Endothelial cell of umbilical vein (primary cell): ENCODE measurements at regions of chr1 and their contacts with region 1.

Region 1: DNA sequence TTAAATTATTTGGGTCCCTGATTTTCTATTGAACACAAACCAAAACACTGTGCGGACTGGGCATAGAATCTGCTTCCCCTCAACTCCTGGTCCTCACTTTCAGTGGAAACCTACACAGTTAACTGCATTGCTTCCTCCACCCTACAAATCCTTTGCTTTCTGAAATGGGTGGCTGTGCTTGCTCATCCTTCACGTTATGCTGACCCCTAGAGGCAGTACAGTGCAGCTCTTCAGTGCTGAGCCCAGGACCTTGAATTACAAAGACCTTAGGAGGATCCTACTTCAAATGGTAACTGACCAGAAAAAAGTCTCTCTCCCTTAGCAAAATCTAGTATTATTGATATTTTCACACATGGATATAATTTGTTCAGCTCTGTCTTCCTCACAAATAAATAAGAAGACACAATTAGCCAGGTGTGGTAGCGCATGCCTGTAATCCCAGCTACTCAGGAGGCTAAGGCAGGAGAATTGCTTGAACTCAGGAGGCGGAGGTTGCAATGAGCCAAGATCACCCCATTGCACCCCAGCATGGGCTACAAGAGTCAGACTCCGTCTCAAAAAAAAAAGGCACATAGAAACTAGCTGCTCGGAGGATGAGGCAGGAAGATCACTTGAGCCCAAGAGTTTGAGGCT is 63.4 kb upstream of the L1TD1 start:
- DNase-seq: peak; percentile 56
- H3K4me3 ChIP-seq: no peak overlapping the region
- H3K27ac ChIP-seq: no peak overlapping the region
- H3K4me1 ChIP-seq: no peaks in the 10 kb centered on the region
- H3K27me3 ChIP-seq: no peaks in the 10 kb centered on the region
- CTCF ChIP-seq: peak; percentile 80 to 85
- POLR2A ChIP-seq: no peak

Region 2: GRCh38 chr1:61921435-61921834 is 209.8 kb before region 1 on chr1:
- CTCF ChIA-PET with region 1: no interaction called
- POLR2A ChIA-PET with region 1: interaction called, 5 read pairs
- dilution Hi-C with region 1: no loop called
- intact Hi-C with region 1: loop called (anchors 5 kb)
- DNase-seq: no peak
- H3K4me3 ChIP-seq: no peak overlapping the region
- H3K27ac ChIP-seq: no peak overlapping the region
- H3K4me1 ChIP-seq: no peaks in the 10 kb centered on the region
- H3K27me3 ChIP-seq: no peaks in the 10 kb centered on the region
- CTCF ChIP-seq: peak in 1 of 2 donors; percentile 4
- POLR2A ChIP-seq: no peak

Region 3: GRCh38 chr1:61950418-61950817 is 180.8 kb before region 1 on chr1:
- CTCF ChIA-PET with region 1: no interaction called
- POLR2A ChIA-PET with region 1: no interaction called
- dilution Hi-C with region 1: no loop called
- intact Hi-C with region 1: loop called (anchors 2 kb)
- DNase-seq: peak; percentile 19
- H3K4me3 ChIP-seq: no peak overlapping the region
- H3K27ac ChIP-seq: no peak overlapping the region
- H3K4me1 ChIP-seq: no peaks in the 10 kb centered on the region
- H3K27me3 ChIP-seq: no peaks in the 10 kb centered on the region
- CTCF ChIP-seq: peak; percentile 10 to 26
- POLR2A ChIP-seq: no peak

Region 4: GRCh38 chr1:62107923-62108322 is 23.3 kb before region 1 on chr1:
- CTCF ChIA-PET with region 1: no interaction called
- POLR2A ChIA-PET with region 1: no interaction called
- dilution Hi-C with region 1: no loop called
- intact Hi-C with region 1: no loop called
- DNase-seq: no peak
- H3K4me3 ChIP-seq: no peak overlapping the region
- H3K27ac ChIP-seq: no peak overlapping the region
- H3K4me1 ChIP-seq: peaks cover 3% of the 10 kb centered on the region
- H3K27me3 ChIP-seq: no peaks in the 10 kb centered on the region
- CTCF ChIP-seq: no peak
- POLR2A ChIP-seq: no peak

Region 5: GRCh38 chr1:62144238-62144831 is 13.1 kb after region 1 on chr1:
- CTCF ChIA-PET with region 1: interaction called, 45 read pairs
- POLR2A ChIA-PET with region 1: no interaction called
- dilution Hi-C with region 1: no loop called
- intact Hi-C with region 1: no loop called
- DNase-seq: peak; percentile 59
- H3K4me3 ChIP-seq: no peak overlapping the region
- H3K27ac ChIP-seq: no peak overlapping the region
- H3K4me1 ChIP-seq: no peaks in the 10 kb centered on the region
- H3K27me3 ChIP-seq: no peaks in the 10 kb centered on the region
- CTCF ChIP-seq: peak; percentile 53 to 70
- POLR2A ChIP-seq: no peak

Region 6: DNA sequence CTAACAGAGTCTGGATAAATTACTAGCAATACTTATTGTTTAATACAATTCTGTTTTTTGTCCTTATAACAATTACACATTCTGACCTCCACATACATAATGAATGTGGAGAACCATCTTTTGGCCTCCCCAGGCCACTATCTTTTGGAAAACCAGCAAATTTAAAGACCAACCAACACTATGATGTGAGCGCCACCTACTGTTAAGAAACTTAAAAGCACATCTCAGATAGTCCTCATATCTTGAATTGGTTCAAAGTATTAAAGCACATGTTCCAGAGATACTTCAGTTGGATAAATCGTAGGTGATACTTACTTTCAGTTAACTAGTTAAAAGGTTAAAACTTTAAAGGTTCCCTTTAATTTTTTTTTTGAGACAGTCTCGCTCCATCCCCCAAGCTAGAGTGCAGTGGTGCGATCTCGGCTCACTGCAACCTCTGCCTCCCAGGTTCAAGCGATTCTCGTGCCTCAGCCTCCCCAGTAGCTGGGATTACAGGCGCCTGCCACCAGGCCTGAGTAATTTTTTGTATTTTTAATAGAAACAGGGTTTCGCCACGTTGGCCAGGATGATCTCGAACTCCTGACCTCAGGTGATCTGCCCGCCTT is 276.3 kb after region 1 on chr1:
- CTCF ChIA-PET with region 1: interaction called, 3 read pairs
- POLR2A ChIA-PET with region 1: no interaction called
- dilution Hi-C with region 1: no loop called
- intact Hi-C with region 1: loop called (anchors 1 kb)
- DNase-seq: peak; percentile 46
- H3K4me3 ChIP-seq: no peak overlapping the region
- H3K27ac ChIP-seq: no peak overlapping the region
- H3K4me1 ChIP-seq: no peaks in the 10 kb centered on the region
- H3K27me3 ChIP-seq: no peaks in the 10 kb centered on the region
- CTCF ChIP-seq: peak; percentile 55 to 56
- POLR2A ChIP-seq: no peak